ENCODE measurements at regions of chr16 and their contacts with region 1.

Region 1: GRCh38 chr16:20874088-20874581 is 26.0 kb downstream of the DCUN1D3 start:
- DNase-seq: peak; percentile 17
- ATAC-seq: peak; percentile 14
- H3K4me3 Mint-ChIP-seq: peak overlapping the region; percentile 54
- H3K27ac Mint-ChIP-seq: peak overlapping the region; percentile 75
- H3K4me1 Mint-ChIP-seq: peaks cover 45% of the 10 kb centered on the region
- H3K27me3 Mint-ChIP-seq: no peaks in the 10 kb centered on the region

Region 2: DNA sequence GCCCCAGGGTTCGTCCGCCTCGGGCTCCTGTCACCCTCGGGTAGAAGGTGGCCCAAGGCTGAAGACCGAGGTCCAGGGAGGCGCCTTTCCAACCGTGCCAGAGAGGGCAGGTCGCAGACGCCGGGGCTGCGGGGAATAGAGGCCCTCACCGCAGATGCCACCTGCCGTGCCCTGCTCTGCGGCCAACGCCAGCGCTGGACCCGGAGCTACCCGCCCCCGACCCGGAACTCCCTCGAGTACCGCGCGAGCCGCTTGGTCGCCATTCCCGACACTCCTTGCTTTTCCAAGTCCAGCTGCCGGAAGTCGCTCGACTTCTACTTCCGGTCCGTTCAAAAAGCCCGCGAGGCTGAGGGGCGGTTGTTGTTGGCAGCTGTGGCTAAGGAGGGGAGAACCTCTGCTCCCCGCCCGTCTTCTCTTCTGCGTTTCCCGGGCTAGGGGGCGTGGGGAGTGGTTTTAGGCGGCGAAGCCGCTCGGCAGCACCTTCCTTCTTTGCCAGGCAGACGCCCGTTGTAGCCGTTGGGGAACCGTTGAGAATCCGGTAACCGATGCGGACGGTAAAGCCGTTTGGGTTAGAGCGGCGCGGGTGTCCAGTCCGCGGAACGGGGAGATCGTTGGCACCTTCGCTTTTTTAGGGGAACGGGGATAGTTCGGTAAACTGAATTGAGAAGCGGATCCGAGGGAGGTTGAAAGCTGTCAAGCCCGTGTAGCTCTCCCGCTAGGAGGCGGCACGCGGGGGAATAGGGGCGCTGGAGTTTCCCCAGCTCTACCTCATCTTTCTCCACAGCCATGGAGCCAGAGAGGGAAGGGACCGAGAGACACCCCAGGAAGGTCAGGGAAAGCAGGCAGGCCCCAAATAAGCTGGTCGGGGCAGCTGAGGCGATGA is 67.7 kb before region 1 on chr16 and contains the starts of genes ERI2 and REXO5:
- CTCF ChIA-PET with region 1: no interaction called
- POLR2A ChIA-PET with region 1: no interaction called
- intact Hi-C with region 1: loop called in 1 of 2 experiments (anchors 2 kb)
- DNase-seq: peak; percentile 86
- ATAC-seq: peak; percentile 87
- H3K4me3 Mint-ChIP-seq: peak within 1 kb of the TSS; percentile 79
- H3K27ac Mint-ChIP-seq: peak within 1 kb of the TSS; percentile 97
- H3K4me1 Mint-ChIP-seq: peaks cover 18% of the 10 kb centered on the region
- H3K27me3 Mint-ChIP-seq: no peaks in the 10 kb centered on the region
- total RNA-seq, gene ERI2: 17.6 to 19.8 TPM
- total RNA-seq, gene REXO5: 17.9 to 20.4 TPM

Region 3: DNA sequence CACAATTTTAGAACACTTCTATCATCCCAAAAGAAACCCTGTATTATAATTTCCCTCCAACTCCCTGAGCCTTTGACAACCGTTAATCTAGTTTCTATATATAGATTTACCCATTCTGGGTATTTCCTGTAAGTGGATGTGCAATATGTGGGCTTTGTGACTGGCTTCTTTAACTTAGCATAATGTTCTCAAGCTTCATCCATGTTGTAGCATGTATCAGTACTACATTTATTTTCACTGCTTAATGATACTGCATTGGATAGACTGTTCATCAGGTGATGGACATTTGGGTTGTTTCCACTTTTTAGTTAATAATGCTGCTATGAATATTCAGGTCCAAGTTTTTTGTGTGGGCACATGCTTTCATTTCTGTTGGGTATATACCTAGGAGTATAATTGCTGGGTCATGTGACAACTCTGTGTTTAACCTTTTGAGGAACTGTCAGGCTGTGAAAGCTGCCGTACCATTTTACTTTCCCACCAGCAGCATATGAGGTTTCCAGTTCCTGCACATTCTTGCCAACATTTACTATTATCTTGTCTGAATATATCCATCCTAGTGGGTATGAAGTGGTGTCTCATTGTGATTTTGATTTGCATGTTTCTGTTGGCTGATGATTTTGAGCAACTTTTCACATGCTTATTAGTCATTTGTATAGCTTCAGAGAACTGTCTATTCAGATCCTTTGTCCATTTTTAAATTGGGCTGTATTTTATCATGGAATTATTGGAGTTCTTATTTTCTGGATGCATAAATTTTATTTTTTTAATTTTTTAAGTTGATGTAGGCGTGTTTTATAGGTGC is 51.4 kb before region 1 on chr16:
- CTCF ChIA-PET with region 1: no interaction called
- POLR2A ChIA-PET with region 1: no interaction called
- intact Hi-C with region 1: no loop called
- DNase-seq: no peak
- ATAC-seq: peak; percentile 33
- H3K4me3 Mint-ChIP-seq: no peak overlapping the region
- H3K27ac Mint-ChIP-seq: no peak overlapping the region
- H3K4me1 Mint-ChIP-seq: peaks cover 7% of the 10 kb centered on the region
- H3K27me3 Mint-ChIP-seq: no peaks in the 10 kb centered on the region

Region 4: DNA sequence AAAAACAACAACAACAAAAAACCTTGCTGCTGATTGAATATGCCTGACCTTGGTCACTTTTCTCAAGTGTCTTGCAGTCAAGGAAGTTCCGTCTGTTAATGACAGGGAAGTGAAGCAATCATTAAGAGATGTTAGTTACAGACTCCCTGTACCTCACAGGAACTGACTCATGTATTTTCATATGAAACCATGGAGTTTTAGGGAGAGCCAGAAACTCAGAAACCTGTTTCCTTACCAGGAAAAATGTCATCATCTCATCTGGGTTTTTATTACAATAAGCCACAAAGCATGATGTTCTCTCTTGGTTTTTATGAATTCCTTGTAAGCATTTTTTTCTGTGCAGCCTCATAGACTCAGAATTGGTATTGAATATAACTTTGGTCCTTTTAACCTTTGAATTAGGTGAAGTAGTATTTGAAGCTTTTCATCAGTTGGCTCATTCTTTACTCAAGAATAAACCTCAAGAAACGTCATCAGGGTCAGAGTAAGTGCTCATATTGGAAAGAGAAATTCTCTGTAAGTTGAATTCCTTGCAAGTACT is 36.7 kb after region 1 on chr16:
- CTCF ChIA-PET with region 1: interaction called, 3 read pairs
- POLR2A ChIA-PET with region 1: interaction called, 6 read pairs
- intact Hi-C with region 1: loop called (anchors 1 to 2 kb)
- DNase-seq: no peak
- ATAC-seq: peak; percentile 80
- H3K4me3 Mint-ChIP-seq: no peak overlapping the region
- H3K27ac Mint-ChIP-seq: peak overlapping the region; percentile 62
- H3K4me1 Mint-ChIP-seq: peaks cover 23% of the 10 kb centered on the region
- H3K27me3 Mint-ChIP-seq: no peaks in the 10 kb centered on the region

Region 5: GRCh38 chr16:20938426-20938825 is 64.3 kb after region 1 on chr16:
- CTCF ChIA-PET with region 1: interaction called, 5 read pairs
- POLR2A ChIA-PET with region 1: interaction called, 11 read pairs
- intact Hi-C with region 1: loop called (anchors 1 to 2 kb)
- DNase-seq: peak; percentile 48
- ATAC-seq: peak; percentile 89
- H3K4me3 Mint-ChIP-seq: no peak overlapping the region
- H3K27ac Mint-ChIP-seq: peak overlapping the region; percentile 72
- H3K4me1 Mint-ChIP-seq: peaks cover 36% of the 10 kb centered on the region
- H3K27me3 Mint-ChIP-seq: peaks cover 1% of the 10 kb centered on the region

Region 6: DNA sequence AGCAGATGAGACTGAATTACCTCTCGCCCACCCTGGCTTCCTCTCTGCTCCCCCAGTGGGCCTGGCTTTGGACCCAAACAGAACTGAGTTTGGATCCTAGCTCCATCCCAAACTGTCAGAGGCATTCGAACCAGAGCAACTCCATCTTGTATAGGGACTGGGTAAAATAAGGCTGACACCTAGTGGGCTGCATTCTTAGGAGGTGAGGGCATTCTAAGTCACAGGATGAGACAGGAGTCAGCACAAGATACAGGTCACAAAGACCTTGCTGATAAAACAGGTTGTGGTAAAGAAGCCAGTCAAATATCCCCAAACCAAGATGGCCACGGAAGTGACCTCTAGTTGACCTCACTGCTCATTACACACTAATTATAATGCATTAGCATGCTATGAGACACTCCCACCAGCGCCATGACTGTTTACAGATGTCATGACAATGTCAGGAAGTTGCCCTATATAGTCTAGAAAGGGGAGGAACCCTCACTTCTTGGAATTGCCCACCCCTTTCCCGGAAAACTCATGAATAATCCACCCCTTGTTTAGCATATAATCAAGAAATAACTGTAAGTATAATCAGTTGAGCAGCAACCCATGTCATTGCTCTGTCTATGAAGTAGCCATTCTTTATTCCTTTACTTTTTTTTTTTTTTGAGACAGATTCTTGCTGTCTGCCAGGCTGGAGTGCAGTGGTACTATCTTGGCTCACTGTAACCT is 70.9 kb after region 1 on chr16:
- CTCF ChIA-PET with region 1: no interaction called
- POLR2A ChIA-PET with region 1: interaction called, 11 read pairs
- intact Hi-C with region 1: no loop called
- DNase-seq: peak; percentile 78
- ATAC-seq: peak; percentile 78
- H3K4me3 Mint-ChIP-seq: no peak overlapping the region
- H3K27ac Mint-ChIP-seq: peak overlapping the region; percentile 55
- H3K4me1 Mint-ChIP-seq: peaks cover 33% of the 10 kb centered on the region
- H3K27me3 Mint-ChIP-seq: no peaks in the 10 kb centered on the region

Region 7: DNA sequence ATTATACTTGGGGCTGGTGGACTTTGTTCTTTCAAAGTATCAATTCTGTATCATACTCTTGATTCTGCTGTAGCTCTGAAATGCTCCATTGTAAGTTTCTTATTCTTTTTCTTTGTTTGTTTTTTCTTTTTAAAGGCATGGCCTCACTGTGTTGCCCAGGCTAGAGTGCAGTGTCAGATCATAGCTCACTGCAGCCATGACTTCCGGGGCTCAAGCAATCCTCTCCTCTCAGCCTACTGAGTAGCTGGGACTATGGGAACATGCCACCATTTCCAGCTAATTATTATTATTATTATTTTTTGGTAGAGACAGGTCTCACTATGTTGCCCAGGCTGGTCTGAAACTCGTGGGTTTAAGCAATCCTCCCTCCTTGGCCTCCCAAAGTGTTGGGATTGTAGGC is 686.3 kb after region 1 on chr16:
- CTCF ChIA-PET with region 1: no interaction called
- POLR2A ChIA-PET with region 1: no interaction called
- intact Hi-C with region 1: no loop called
- DNase-seq: peak; percentile 1
- ATAC-seq: no peak
- H3K4me3 Mint-ChIP-seq: no peak overlapping the region
- H3K27ac Mint-ChIP-seq: no peak overlapping the region
- H3K4me1 Mint-ChIP-seq: no peaks in the 10 kb centered on the region
- H3K27me3 Mint-ChIP-seq: no peaks in the 10 kb centered on the region

Measured in activated CD4-positive, alpha-beta T cell treated with anti-CD3 and anti-CD28 coated beads for 36 hours (primary cell).